HEK293 (cell line): ENCODE measurements at regions of chr1 and their contacts with region 1.

Region 1: DNA sequence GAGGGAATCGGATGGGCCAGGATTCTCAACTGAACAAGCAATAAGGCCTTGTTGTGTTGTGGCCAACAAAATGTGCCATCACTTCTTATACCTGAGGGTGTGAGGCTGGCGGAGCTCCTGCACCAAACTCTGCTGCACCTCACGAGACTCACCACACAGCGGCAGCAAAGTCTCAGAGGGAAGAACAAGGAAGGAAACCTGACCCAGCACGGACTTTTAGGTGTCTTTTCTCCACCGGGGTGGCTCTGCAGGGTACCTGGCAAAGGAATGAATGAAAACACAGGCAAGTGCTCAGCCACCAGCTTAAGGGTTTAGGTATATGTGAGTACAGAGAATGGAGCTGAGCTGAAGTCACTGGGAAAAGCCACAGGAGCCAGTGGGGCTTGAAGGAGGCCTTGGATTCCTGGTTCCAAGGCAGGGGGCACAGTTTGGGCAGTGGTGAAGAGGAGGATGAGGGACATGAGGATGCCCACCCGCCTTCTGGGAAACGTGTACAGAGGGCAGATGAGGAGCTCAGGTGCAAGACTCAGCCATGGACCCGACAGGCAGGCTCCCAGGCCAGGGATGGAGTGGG is 31.1 kb upstream of the HSD3B1 start:
- H3K4me3 ChIP-seq: no peak overlapping the region
- H3K27ac ChIP-seq: no peak overlapping the region
- H3K4me1 ChIP-seq: no peaks in the 10 kb centered on the region
- CTCF ChIP-seq: peak; percentile 50; the same call in 1 of the 2 replicates

Region 2: DNA sequence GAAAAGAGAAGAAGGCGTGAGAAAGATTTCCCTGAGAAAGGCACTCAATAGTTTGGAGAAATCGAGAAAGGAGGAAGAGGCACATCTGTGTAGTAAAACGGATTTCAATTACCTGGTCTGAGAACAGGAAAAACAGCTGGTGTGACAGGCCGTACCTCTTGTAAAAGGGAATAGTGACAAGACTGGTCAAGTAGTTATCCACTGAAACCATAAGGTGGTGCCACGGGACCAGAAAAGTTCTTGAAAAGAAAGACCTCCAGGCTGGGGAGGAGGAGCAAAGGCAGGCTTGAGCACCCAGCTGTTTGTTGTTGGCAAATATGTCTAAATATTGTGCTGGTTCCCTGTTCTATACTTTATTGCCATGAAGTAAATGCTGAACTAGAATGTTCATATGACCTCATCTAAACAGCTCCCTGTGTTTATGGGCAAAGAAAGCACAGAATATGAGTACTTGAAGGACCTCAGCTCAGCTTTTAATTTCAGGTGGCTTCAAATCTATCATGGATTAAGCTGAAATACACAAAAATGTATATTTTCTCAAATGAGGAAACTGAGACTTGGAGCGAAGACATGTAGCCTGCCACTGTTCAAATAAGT is 103.4 kb before region 1 on chr1:
- CTCF ChIA-PET with region 1: interaction called, 11 read pairs
- POLR2A ChIA-PET with region 1: no interaction called
- H3K4me3 ChIP-seq: no peak overlapping the region
- H3K27ac ChIP-seq: no peak overlapping the region
- H3K4me1 ChIP-seq: peaks cover 8% of the 10 kb centered on the region
- CTCF ChIP-seq: peak; percentile 61

Region 3: DNA sequence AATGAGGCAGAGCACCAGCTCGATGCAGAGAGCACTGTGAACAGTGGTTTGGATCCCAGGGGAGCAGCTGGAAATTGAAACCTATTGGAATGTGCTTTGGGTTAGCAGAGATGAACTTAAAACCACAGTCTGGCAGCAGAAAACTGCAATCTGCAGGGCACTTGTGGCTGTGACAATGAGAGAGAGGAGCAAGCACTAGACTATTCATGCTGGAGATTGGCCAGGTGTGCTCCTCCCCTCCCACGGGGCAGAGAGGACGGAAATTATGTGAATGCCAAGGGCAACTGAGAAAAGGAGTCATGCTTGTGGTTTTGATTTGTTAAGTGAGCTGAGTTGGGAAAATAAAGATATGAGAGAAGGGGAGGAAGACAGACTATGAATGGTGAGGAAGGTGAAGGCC is 22.9 kb before region 1 on chr1:
- CTCF ChIA-PET with region 1: interaction called, 13 read pairs
- POLR2A ChIA-PET with region 1: no interaction called
- H3K4me3 ChIP-seq: no peak overlapping the region
- H3K27ac ChIP-seq: no peak overlapping the region
- H3K4me1 ChIP-seq: no peaks in the 10 kb centered on the region
- CTCF ChIP-seq: no peak

Region 4: GRCh38 chr1:119531624-119532323 is 55.8 kb after region 1 on chr1:
- CTCF ChIA-PET with region 1: no interaction called
- POLR2A ChIA-PET with region 1: no interaction called
- H3K4me3 ChIP-seq: no peak overlapping the region
- H3K27ac ChIP-seq: no peak overlapping the region
- H3K4me1 ChIP-seq: no peaks in the 10 kb centered on the region
- CTCF ChIP-seq: no peak

Region 5: DNA sequence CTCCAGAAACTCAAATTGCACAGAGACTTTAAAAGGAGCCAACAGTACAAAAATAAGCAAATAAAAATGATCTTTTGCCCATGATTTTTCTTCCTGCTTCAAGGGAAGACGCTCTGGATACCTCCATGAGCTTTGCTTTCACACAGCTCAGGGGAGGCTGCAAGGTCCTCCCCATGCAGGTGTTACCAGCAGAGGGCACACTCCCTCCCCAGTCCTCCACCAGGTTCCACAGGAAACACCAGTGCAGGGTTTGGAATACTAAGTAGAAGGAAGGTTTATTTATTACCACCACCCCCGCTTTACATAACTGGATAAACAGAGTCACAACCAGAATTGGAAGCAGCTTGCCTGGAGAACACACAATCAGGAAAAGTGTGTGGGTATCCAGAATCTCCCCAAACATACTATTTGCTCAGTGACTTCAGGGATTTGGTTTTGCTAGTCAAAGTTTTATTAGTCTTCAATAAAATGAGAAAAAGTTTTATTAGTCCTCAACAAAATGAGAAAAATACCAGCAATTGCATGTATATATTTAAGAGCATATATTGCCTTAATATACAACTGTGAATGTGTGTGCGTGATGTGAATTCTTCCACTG is 68.3 kb after region 1 on chr1:
- CTCF ChIA-PET with region 1: interaction called, 12 read pairs
- POLR2A ChIA-PET with region 1: no interaction called
- H3K4me3 ChIP-seq: no peak overlapping the region
- H3K27ac ChIP-seq: no peak overlapping the region
- H3K4me1 ChIP-seq: no peaks in the 10 kb centered on the region
- CTCF ChIP-seq: no peak; the same call in 1 of the 2 replicates